Activated CD4-positive, alpha-beta memory T cell treated with anti-CD3 and anti-CD28 coated beads for 36 hours (primary cell): ENCODE measurements at regions of chr9 and their contacts with region 1.

Region 1: DNA sequence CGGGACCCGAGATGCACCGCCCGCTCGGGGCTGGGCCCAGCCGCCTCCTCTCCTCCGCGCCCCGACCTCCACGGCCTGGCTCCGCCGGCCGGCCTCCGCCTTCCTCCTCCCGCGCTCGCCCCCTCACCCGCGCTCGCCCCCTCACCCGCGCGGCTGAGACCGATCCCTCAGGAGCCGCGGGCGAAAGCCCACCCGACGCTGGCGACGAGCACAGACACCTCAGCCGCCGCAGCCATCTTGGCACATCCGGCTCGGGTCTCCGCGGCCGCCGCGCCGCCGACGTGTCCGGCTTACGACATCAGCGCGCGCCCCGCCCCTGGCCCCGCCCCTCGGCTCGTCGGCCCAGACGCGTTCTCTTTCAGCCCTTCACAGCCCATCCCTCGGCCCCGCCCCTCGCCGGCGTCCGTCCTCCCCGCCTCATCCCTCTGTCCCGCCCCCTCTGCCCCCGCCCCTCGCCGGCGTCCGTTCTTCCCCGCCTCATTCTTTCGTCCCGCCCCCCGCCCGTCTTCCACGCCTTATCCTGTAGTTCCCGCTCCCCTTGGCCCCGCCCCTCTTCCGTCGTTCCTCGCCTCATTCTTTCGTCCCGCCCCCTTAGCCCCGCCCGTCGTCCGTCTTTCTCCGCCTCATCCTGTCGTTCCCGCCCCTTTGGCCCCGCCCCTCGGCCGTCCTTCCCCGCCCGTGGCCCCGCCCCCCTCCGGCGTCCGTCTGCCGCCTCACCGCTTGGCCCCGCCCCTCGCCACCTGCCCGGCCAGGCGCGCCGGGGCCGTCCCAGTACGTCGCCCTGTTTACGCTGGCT is at the start of gene SEC16A:
- DNase-seq: peak; percentile 100
- H3K4me3 Mint-ChIP-seq: peak within 1 kb of the TSS; percentile 98
- H3K27ac Mint-ChIP-seq: peak within 1 kb of the TSS; percentile 98
- H3K4me1 Mint-ChIP-seq: peaks cover 30% of the 10 kb centered on the region
- H3K27me3 Mint-ChIP-seq: no peaks in the 10 kb centered on the region
- total RNA-seq, gene SEC16A: 54.1 to 57.0 TPM

Region 2: DNA sequence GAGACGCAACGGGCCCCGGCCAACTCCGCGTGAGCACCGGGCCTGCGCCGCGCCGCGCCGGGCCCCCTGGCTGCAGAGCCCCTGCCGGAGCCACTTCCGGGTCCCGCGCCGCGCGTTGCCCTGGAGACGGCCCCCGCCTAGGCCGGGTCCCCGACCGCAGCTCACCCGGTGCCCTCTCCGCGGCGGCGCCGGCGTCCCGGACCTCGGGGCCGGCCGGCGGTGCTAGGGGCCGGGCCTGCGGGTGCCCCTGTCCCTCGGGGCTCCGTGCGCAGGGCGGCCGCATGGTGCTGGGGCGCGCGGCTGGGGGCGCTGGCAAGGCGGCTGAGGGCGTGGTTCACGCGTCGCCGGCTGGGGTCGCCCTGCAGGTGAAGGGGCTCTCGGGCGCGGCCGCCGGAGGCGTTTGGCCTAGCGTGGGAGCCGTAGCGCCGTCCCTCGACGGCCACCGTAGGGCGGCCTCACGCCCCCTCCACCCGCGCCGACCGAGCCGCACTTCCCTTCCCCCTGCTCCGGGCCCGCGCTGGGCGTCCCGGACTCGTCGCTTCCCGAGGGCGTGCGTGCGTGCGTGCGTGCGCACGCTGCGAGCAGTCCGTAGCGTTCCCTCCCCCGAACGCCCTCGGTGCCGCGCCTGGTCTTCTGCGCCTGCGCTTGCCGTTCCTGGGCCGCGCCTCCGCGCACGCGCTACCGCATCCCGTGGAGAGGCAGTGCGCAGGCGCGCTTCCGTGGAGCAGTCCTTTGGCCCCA is 364.5 kb before region 1 on chr9 and contains the start of gene TMEM250:
- CTCF ChIA-PET with region 1: no interaction called
- POLR2A ChIA-PET with region 1: no interaction called
- intact Hi-C with region 1: loop called (anchors 5 kb)
- DNase-seq: peak; percentile 97
- H3K4me3 Mint-ChIP-seq: peak within 1 kb of the TSS; percentile 84
- H3K27ac Mint-ChIP-seq: peak within 1 kb of the TSS; percentile 87
- H3K4me1 Mint-ChIP-seq: peaks cover 30% of the 10 kb centered on the region
- H3K27me3 Mint-ChIP-seq: no peaks in the 10 kb centered on the region
- total RNA-seq, gene TMEM250: 28.0 to 28.4 TPM

Region 3: GRCh38 chr9:136439550-136440408 is 43.2 kb before region 1 on chr9 and contains the start of gene INPP5E:
- CTCF ChIA-PET with region 1: interaction called, 4 read pairs
- POLR2A ChIA-PET with region 1: no interaction called
- intact Hi-C with region 1: loop called (anchors 5 kb)
- DNase-seq: peak; percentile 84
- H3K4me3 Mint-ChIP-seq: peak within 1 kb of the TSS; percentile 88
- H3K27ac Mint-ChIP-seq: peak within 1 kb of the TSS; percentile 23
- H3K4me1 Mint-ChIP-seq: peaks cover 23% of the 10 kb centered on the region
- H3K27me3 Mint-ChIP-seq: no peaks in the 10 kb centered on the region
- total RNA-seq, gene INPP5E: 18.8 to 21.3 TPM

Region 4: GRCh38 chr9:136545966-136546698 is 63.1 kb after region 1 on chr9 and contains the start of gene NOTCH1:
- CTCF ChIA-PET with region 1: interaction called, 5 read pairs
- POLR2A ChIA-PET with region 1: no interaction called
- intact Hi-C with region 1: loop called (anchors 1 kb)
- DNase-seq: peak; percentile 93
- H3K4me3 Mint-ChIP-seq: peak within 1 kb of the TSS; percentile 96
- H3K27ac Mint-ChIP-seq: peak within 1 kb of the TSS; percentile 94
- H3K4me1 Mint-ChIP-seq: peaks cover 45% of the 10 kb centered on the region
- H3K27me3 Mint-ChIP-seq: no peaks in the 10 kb centered on the region
- total RNA-seq, gene NOTCH1: 67.0 to 68.3 TPM

Region 5: GRCh38 chr9:136671646-136672430 is 188.8 kb after region 1 on chr9:
- CTCF ChIA-PET with region 1: interaction called, 13 read pairs
- POLR2A ChIA-PET with region 1: no interaction called
- intact Hi-C with region 1: no loop called
- DNase-seq: peak; percentile 48
- H3K4me3 Mint-ChIP-seq: no peak overlapping the region
- H3K27ac Mint-ChIP-seq: no peak overlapping the region
- H3K4me1 Mint-ChIP-seq: no peaks in the 10 kb centered on the region
- H3K27me3 Mint-ChIP-seq: peaks cover 5% of the 10 kb centered on the region

Region 6: GRCh38 chr9:137223078-137223970 is 740.3 kb after region 1 on chr9:
- CTCF ChIA-PET with region 1: no interaction called
- POLR2A ChIA-PET with region 1: no interaction called
- intact Hi-C with region 1: loop called (anchors 1 kb)
- DNase-seq: peak; percentile 99
- H3K4me3 Mint-ChIP-seq: peak overlapping the region; percentile 73
- H3K27ac Mint-ChIP-seq: peak overlapping the region; percentile 58
- H3K4me1 Mint-ChIP-seq: peaks cover 5% of the 10 kb centered on the region
- H3K27me3 Mint-ChIP-seq: peaks cover 2% of the 10 kb centered on the region